ENCODE measurements at regions of chr2 and their contacts with region 1.

Region 1: DNA sequence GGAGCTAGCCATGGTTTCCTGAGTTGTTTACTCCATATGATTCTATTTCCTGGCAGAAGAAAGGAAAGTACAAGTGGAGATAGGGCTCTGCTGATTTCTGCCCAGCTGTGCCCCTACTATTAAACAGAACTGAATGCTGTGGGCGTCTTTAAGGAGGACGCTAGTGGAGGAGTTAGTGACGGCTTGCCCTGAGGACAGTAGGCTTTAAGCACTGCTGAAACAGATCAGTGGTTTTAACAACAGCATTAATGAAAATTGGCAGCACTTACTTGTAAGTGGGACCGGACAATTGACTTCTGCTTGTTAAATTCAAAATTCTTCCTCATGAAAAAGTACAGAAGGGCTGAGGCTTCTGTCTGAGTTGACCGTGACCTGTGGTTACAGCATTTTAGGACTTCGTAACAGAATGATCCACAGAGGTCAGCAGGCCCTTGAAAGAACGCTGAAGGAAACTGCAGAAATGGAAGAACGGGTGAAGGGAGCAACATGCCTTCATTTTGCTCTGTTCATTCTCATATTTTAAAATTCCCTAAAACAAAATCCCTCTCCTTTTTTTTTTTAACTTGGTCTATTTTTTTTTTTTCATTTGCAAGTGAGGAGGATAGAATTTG is 80.6 kb upstream of the CCDC195 start:
- DNase-seq: no peak
- H3K4me3 ChIP-seq: no peak overlapping the region
- H3K27ac ChIP-seq: no peak overlapping the region
- H3K4me1 ChIP-seq: no peaks in the 10 kb centered on the region
- H3K27me3 ChIP-seq: no peaks in the 10 kb centered on the region
- CTCF ChIP-seq: no peak
- POLR2A ChIP-seq: no peak

Region 2: DNA sequence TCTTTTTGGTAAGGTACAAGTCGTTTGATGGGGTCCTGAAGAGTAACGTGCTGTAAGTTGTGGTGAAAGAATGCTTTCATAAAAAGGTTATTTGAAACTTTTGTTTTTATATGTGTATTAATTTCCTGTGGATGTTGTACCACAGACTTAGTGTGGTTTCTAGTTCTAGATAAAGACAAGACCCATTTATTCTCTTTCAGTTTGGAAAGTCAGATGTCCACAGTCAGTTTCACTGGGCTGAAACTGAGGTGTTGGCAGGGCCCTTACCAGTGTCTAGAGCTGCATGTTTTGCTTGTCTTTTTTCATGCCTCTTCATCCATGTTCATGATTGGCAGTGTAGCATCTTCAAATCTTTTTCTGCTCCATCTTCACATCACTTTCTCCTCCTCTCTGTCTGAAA is 267.6 kb after region 1 on chr2:
- intact Hi-C with region 1: no loop called
- DNase-seq: no peak
- H3K4me3 ChIP-seq: no peak overlapping the region
- H3K27ac ChIP-seq: no peak overlapping the region
- H3K4me1 ChIP-seq: no peaks in the 10 kb centered on the region
- H3K27me3 ChIP-seq: no peaks in the 10 kb centered on the region
- CTCF ChIP-seq: no peak
- POLR2A ChIP-seq: no peak

Region 3: DNA sequence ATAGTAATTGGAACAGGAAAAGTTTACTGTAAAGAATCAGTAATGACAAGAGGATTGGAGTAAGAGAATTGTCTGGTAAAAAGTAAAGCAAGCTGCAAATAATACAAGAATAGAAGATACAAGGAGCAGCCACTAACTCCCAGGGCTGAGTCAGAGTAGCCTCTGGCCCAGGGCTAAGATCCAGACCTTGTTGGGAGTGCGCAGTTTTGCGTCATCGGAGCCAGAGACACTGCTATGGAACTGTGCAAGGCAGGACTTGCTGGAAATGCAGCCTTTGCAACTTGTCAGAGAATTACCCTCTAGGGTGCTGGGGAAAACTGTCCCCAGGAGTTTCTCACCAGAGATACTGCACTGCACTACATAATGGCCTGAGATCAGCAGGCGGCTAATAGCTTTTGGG is 737.9 kb after region 1 on chr2:
- intact Hi-C with region 1: loop called (anchors 5 kb)
- DNase-seq: no peak
- H3K4me3 ChIP-seq: no peak overlapping the region
- H3K27ac ChIP-seq: no peak overlapping the region
- H3K4me1 ChIP-seq: no peaks in the 10 kb centered on the region
- H3K27me3 ChIP-seq: no peaks in the 10 kb centered on the region
- CTCF ChIP-seq: no peak
- POLR2A ChIP-seq: no peak

Measured in breast epithelium (tissue), 4 donors.